T-cell (primary cell): ENCODE measurements at regions of chr1 and their contacts with region 1.

Region 1: GRCh38 chr1:116934586-116935207 is 25.0 kb downstream of the PTGFRN start:
- DNase-seq: peak in 1 of 35 experiments; percentile 53
- ATAC-seq: no peak
- H3K4me3 ChIP-seq: no peak overlapping the region
- H3K4me3 Mint-ChIP-seq: no peak overlapping the region
- H3K27ac ChIP-seq: no peak overlapping the region
- H3K27ac Mint-ChIP-seq: peak overlapping the region in 1 of 2 donors; percentile 83
- H3K4me1 ChIP-seq: peaks cover 6 to 12% of the 10 kb centered on the region in 2 experiments
- H3K4me1 Mint-ChIP-seq: peaks cover 18 to 24% (median 22%) of the 10 kb centered on the region in 3 donors
- H3K27me3 ChIP-seq: no peaks in the 10 kb centered on the region
- H3K27me3 Mint-ChIP-seq: no peaks in the 10 kb centered on the region

Region 2: GRCh38 chr1:116951200-116951935 is 16.7 kb after region 1 on chr1:
- CTCF ChIA-PET with region 1: no interaction called
- POLR2A ChIA-PET with region 1: interaction called in 1 of 2 experiments, 10 read pairs
- DNase-seq: no peak
- ATAC-seq: no peak
- H3K4me3 ChIP-seq: no peak overlapping the region
- H3K4me3 Mint-ChIP-seq: no peak overlapping the region
- H3K27ac ChIP-seq: no peak overlapping the region
- H3K27ac Mint-ChIP-seq: no peak overlapping the region
- H3K4me1 ChIP-seq: no peaks in the 10 kb centered on the region
- H3K4me1 Mint-ChIP-seq: no peaks in the 10 kb centered on the region
- H3K27me3 ChIP-seq: no peaks in the 10 kb centered on the region
- H3K27me3 Mint-ChIP-seq: no peaks in the 10 kb centered on the region

Region 3: DNA sequence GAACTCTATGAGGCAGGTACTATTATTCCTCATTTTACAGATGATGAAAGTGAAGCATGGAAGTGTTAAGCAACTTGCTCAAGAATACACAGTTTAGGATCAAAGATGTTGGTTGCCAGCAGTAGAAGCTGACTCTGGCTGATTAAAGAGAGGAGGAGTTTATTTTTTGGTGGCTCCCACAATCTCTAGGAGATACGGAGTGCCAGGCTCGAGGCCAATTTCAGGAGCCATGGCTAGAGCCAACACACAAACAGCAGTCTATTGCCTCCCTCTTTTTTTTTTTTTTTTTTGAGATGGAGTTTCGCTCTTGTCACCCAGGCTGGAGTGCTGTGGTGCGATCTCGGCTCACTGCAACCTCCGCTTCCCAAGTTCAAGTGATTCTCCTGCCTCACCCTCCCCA is 145.0 kb after region 1 on chr1:
- CTCF ChIA-PET with region 1: interaction called, 3 to 14 read pairs
- POLR2A ChIA-PET with region 1: no interaction called
- DNase-seq: no peak
- ATAC-seq: no peak
- H3K4me3 ChIP-seq: no peak overlapping the region
- H3K4me3 Mint-ChIP-seq: no peak overlapping the region
- H3K27ac ChIP-seq: no peak overlapping the region
- H3K27ac Mint-ChIP-seq: no peak overlapping the region
- H3K4me1 ChIP-seq: no peaks in the 10 kb centered on the region
- H3K4me1 Mint-ChIP-seq: peaks cover 0 to 11% (median 10%) of the 10 kb centered on the region in 3 donors
- H3K27me3 ChIP-seq: no peaks in the 10 kb centered on the region
- H3K27me3 Mint-ChIP-seq: no peaks in the 10 kb centered on the region